Heart left ventricle (tissue), 16 donors: ENCODE measurements at regions of chr1 and their contacts with region 1.

Region 1: GRCh38 chr1:36397378-36398230 is at the start of gene LSM10:
- DNase-seq: peak; percentile 95 to 96 (median 95)
- ATAC-seq: peak; percentile 94 to 98 (median 97)
- H3K4me3 ChIP-seq: peak within 1 kb of the TSS; percentile 60 to 99 (median 80)
- H3K27ac ChIP-seq: peak within 1 kb of the TSS; percentile 71 to 98 (median 90)
- H3K4me1 ChIP-seq: peaks cover 0 to 44% (median 14%) of the 10 kb centered on the region in 12 donors
- H3K27me3 ChIP-seq: no peaks in the 10 kb centered on the region
- CTCF ChIP-seq: peak in 3 of 12 donors; percentile 6 to 21 (median 20)
- POLR2A ChIP-seq: peak in 1 of 2 donors; percentile 93
- total RNA-seq, gene LSM10: 39.1 to 68.7 (median 49.7) TPM

Region 2: GRCh38 chr1:35894183-35894582 is 503.4 kb before region 1 on chr1:
- intact Hi-C with region 1: no loop called
- DNase-seq: peak in 4 of 5 donors; percentile 21 to 48 (median 32)
- ATAC-seq: peak; percentile 39 to 87 (median 85)
- H3K4me3 ChIP-seq: no peak overlapping the region
- H3K27ac ChIP-seq: peak overlapping the region in 1 of 12 donors; percentile 57
- H3K4me1 ChIP-seq: peaks cover 0 to 18% (median 0%) of the 10 kb centered on the region in 12 donors
- H3K27me3 ChIP-seq: no peaks in the 10 kb centered on the region
- CTCF ChIP-seq: no peak
- POLR2A ChIP-seq: no peak

Region 3: GRCh38 chr1:36385410-36386257 is 12.0 kb before region 1 on chr1 and contains the start of gene STK40:
- intact Hi-C with region 1: loop called in 1 of 10 experiments (anchors 1 kb)
- DNase-seq: peak; percentile 98 to 99 (median 99)
- ATAC-seq: peak; percentile 89 to 96 (median 94)
- H3K4me3 ChIP-seq: peak within 1 kb of the TSS; percentile 70 to 98 (median 91)
- H3K27ac ChIP-seq: peak within 1 kb of the TSS; percentile 93 to 99 (median 97)
- H3K4me1 ChIP-seq: peaks cover 10 to 84% (median 59%) of the 10 kb centered on the region in 12 donors
- H3K27me3 ChIP-seq: no peaks in the 10 kb centered on the region
- CTCF ChIP-seq: no peak
- POLR2A ChIP-seq: peak; percentile 76 to 92
- total RNA-seq, gene STK40: 50.4 to 114 (median 59.4) TPM

Region 4: GRCh38 chr1:36576118-36576517 is 178.5 kb after region 1 on chr1:
- intact Hi-C with region 1: no loop called
- DNase-seq: peak; percentile 24 to 69 (median 39)
- ATAC-seq: peak in 3 of 4 donors; percentile 59 to 68 (median 68)
- H3K4me3 ChIP-seq: no peak overlapping the region
- H3K27ac ChIP-seq: no peak overlapping the region
- H3K4me1 ChIP-seq: no peaks in the 10 kb centered on the region
- H3K27me3 ChIP-seq: peaks cover 0 to 73% (median 24%) of the 10 kb centered on the region in 9 donors
- CTCF ChIP-seq: peak; percentile 58 to 76 (median 70)
- POLR2A ChIP-seq: no peak

Region 5: GRCh38 chr1:36894824-36895223 is 497.2 kb after region 1 on chr1:
- intact Hi-C with region 1: no loop called
- DNase-seq: no peak
- ATAC-seq: no peak
- H3K4me3 ChIP-seq: no peak overlapping the region
- H3K27ac ChIP-seq: no peak overlapping the region
- H3K4me1 ChIP-seq: no peaks in the 10 kb centered on the region
- H3K27me3 ChIP-seq: peaks cover 0 to 25% (median 0%) of the 10 kb centered on the region in 9 donors
- CTCF ChIP-seq: no peak
- POLR2A ChIP-seq: no peak